AG04449 (cell line): ENCODE measurements at regions of chr1 and their contacts with region 1.

Region 1: DNA sequence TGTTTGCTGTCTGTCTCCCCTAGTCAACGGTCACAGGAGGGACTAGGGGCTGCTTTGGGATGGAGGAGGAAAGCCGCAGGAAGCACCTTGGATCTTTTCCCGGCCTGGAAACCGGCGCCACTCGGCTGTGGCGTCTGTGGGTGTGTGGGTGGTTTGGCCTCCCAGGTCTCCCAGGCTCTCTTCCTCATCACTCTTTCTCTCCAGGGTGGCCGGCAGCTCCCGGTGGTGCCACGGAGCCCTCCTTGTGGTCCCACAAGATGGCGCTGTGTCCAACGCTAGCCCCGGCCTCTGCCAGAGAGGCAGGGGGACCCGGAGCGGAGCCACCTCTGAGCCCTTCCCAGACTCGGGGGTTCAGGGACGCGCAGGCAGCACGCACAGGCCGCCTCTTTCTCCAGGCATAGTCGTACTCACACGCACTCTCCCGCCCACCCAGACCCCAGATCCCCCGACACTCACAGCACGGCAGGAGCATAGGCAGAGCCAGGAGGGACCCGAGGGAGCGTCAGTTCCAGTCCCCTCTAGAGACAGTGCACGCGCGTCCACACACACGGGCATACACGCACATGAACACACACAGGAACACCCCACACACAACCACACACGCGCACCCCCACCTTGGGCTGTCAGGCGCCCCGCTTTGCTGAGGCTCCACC is 31.2 kb downstream of the CDCP2 start:
- DNase-seq: peak; percentile 23
- H3K4me3 ChIP-seq: peak overlapping the region; percentile 20
- CTCF ChIP-seq: peak; percentile 95

Region 2: GRCh38 chr1:54047384-54048305 is 74.0 kb before region 1 on chr1:
- CTCF ChIA-PET with region 1: no interaction called
- POLR2A ChIA-PET with region 1: no interaction called
- DNase-seq: no peak
- H3K4me3 ChIP-seq: no peak overlapping the region
- CTCF ChIP-seq: no peak

Region 3: GRCh38 chr1:54107131-54107530 is 14.5 kb before region 1 on chr1:
- CTCF ChIA-PET with region 1: interaction called, 14 read pairs
- POLR2A ChIA-PET with region 1: no interaction called
- DNase-seq: no peak
- H3K4me3 ChIP-seq: no peak overlapping the region
- CTCF ChIP-seq: peak; percentile 60

Region 4: DNA sequence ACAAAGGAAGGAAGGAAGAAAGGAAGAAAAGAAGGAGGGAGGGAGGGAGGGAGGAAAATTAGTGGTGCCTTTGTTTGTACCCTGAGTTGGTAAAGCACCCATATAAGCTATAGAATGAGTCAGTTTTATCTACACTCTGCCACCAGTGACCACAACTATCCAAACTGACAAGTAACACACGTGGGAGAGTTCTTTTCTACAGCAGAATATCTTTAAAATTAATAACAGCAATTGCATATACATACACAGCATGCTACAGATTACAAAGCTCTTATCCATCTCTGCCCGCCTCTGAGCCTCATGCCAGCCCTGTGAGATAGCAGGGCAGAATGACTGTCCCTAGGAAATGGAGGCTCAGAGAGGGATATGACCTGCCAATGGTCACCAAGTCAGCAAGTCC is 10.9 kb after region 1 on chr1:
- CTCF ChIA-PET with region 1: interaction called, 94 read pairs
- POLR2A ChIA-PET with region 1: interaction called, 8 read pairs
- DNase-seq: no peak
- H3K4me3 ChIP-seq: no peak overlapping the region
- CTCF ChIP-seq: no peak

Region 5: GRCh38 chr1:54137514-54138061 is 16.0 kb after region 1 on chr1:
- CTCF ChIA-PET with region 1: interaction called, 94 read pairs
- POLR2A ChIA-PET with region 1: interaction called, 8 read pairs
- DNase-seq: peak; percentile 71
- H3K4me3 ChIP-seq: no peak overlapping the region
- CTCF ChIP-seq: no peak

Region 6: DNA sequence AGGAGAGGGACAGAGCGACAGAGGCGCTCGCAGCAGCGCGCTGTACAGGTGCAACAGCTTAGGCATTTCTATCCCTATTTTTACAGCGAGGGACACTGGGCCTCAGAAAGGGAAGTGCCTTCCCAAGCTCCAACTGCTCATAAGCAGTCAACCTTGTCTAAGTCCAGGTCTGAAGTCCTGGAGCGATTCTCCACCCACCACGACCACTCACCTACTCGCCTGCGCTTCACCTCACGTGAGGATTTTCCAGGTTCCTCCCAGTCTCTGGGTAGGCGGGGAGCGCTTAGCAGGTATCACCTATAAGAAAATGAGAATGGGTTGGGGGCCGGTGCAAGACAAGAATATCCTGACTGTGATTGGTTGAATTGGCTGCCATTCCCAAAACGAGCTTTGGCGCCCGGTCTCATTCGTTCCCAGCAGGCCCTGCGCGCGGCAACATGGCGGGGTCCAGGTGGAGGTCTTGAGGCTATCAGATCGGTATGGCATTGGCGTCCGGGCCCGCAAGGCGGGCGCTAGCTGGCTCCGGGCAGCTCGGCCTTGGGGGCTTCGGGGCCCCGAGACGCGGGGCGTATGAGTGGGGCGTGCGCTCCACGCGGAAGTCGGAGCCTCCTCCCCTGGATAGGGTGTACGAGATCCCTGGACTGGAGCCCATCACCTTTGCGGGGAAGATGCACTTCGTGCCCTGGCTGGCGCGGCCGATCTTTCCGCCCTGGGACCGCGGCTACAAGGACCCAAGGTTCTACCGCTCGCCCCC is 78.3 kb after region 1 on chr1 and contains the starts of genes CYB5RL and MRPL37:
- CTCF ChIA-PET with region 1: interaction called, 12 read pairs
- POLR2A ChIA-PET with region 1: interaction called, 6 read pairs
- DNase-seq: peak; percentile 78
- H3K4me3 ChIP-seq: peak within 1 kb of the TSS; percentile 95
- CTCF ChIP-seq: no peak